CD8-positive, alpha-beta T cell (primary cell): ENCODE measurements at regions of chr19 and their contacts with region 1.

Region 1: GRCh38 chr19:5719961-5720790 is at the starts of genes CATSPERD and LONP1:
- DNase-seq: peak; percentile 92 to 100 (median 97)
- ATAC-seq: peak; percentile 86
- H3K4me3 ChIP-seq: peak within 1 kb of the TSS; percentile 91 to 94
- H3K4me3 Mint-ChIP-seq: peak within 1 kb of the TSS; percentile 92
- H3K27ac ChIP-seq: peak within 1 kb of the TSS; percentile 93 to 96
- H3K27ac Mint-ChIP-seq: peak within 1 kb of the TSS; percentile 96
- H3K4me1 ChIP-seq: peaks cover 23% of the 10 kb centered on the region
- H3K4me1 Mint-ChIP-seq: peaks cover 29% of the 10 kb centered on the region
- H3K27me3 ChIP-seq: no peaks in the 10 kb centered on the region
- H3K27me3 Mint-ChIP-seq: no peaks in the 10 kb centered on the region
- CTCF ChIP-seq: peak; percentile 89
- total RNA-seq, gene CATSPERD: not detected
- total RNA-seq, gene LONP1: 90.6 to 109 TPM

Region 2: GRCh38 chr19:5680437-5681368 is 39.5 kb before region 1 on chr19 and contains the starts of genes HSD11B1L and MICOS13:
- CTCF ChIA-PET with region 1: no interaction called
- POLR2A ChIA-PET with region 1: interaction called, 5 read pairs
- intact Hi-C with region 1: loop called (anchors 1 kb)
- DNase-seq: peak; percentile 95 to 100 (median 98)
- ATAC-seq: peak; percentile 94
- H3K4me3 ChIP-seq: peak within 1 kb of the TSS; percentile 94 to 96
- H3K4me3 Mint-ChIP-seq: peak within 1 kb of the TSS; percentile 90
- H3K27ac ChIP-seq: peak within 1 kb of the TSS; percentile 98 to 100
- H3K27ac Mint-ChIP-seq: peak within 1 kb of the TSS; percentile 96
- H3K4me1 ChIP-seq: peaks cover 15% of the 10 kb centered on the region
- H3K4me1 Mint-ChIP-seq: peaks cover 25% of the 10 kb centered on the region
- H3K27me3 ChIP-seq: no peaks in the 10 kb centered on the region
- H3K27me3 Mint-ChIP-seq: no peaks in the 10 kb centered on the region
- CTCF ChIP-seq: no peak
- total RNA-seq, gene HSD11B1L: 3.1 to 4.1 TPM
- total RNA-seq, gene MICOS13: 19.6 to 24.8 TPM

Region 3: GRCh38 chr19:5690125-5690954 is 29.8 kb before region 1 on chr19 and contains the start of gene RPL36:
- CTCF ChIA-PET with region 1: interaction called, 20 read pairs
- POLR2A ChIA-PET with region 1: interaction called, 27 read pairs
- intact Hi-C with region 1: loop called (anchors 1 kb)
- DNase-seq: peak; percentile 95 to 100 (median 99)
- ATAC-seq: peak; percentile 63
- H3K4me3 ChIP-seq: peak within 1 kb of the TSS; percentile 84 to 96
- H3K4me3 Mint-ChIP-seq: peak within 1 kb of the TSS; percentile 91
- H3K27ac ChIP-seq: peak within 1 kb of the TSS; percentile 86 to 89
- H3K27ac Mint-ChIP-seq: peak within 1 kb of the TSS; percentile 93
- H3K4me1 ChIP-seq: peaks cover 26% of the 10 kb centered on the region
- H3K4me1 Mint-ChIP-seq: peaks cover 48% of the 10 kb centered on the region
- H3K27me3 ChIP-seq: no peaks in the 10 kb centered on the region
- H3K27me3 Mint-ChIP-seq: no peaks in the 10 kb centered on the region
- CTCF ChIP-seq: peak; percentile 96
- total RNA-seq, gene RPL36: 1,425 to 1,465 TPM